Activated CD4-positive, alpha-beta T cell treated with anti-CD3 and anti-CD28 coated beads for 36 hours (primary cell): ENCODE measurements at regions of chr15 and their contacts with region 1.

Region 1: DNA sequence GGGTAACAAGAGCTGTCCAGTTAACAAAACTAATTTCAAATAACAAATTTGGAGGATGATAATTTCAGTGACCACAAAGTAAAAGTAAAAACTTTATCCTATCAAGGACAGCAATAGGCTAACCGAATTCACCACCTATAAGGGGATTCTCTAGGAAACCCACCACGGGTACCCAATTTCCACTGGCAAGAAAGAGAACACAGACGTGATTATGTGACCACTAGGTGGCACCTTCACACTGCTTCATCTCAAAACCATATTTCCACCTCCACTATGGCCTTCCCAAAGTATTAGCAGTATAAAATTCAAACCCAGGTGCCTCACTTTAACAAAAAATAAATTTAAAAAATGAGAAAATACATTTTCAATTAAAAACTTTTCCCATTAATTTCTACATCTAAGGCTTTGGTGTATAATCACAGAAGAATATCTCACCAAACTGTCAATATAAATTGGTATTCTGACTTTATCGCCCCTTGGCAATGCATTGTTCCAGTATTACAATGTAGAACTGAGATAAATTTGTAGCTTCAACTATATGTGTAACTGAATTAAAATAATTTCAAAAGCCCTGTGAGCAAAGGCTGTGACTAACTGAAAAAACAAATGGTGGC is 96.5 kb downstream of the FSIP1 start:
- DNase-seq: peak; percentile 46
- ATAC-seq: no peak
- H3K4me3 Mint-ChIP-seq: no peak overlapping the region
- H3K27ac Mint-ChIP-seq: no peak overlapping the region
- H3K4me1 Mint-ChIP-seq: peaks cover 1% of the 10 kb centered on the region
- H3K27me3 Mint-ChIP-seq: no peaks in the 10 kb centered on the region

Region 2: GRCh38 chr15:39699516-39700374 is 13.6 kb after region 1 on chr15:
- CTCF ChIA-PET with region 1: interaction called, 15 read pairs
- POLR2A ChIA-PET with region 1: no interaction called
- intact Hi-C with region 1: no loop called
- DNase-seq: no peak
- ATAC-seq: no peak
- H3K4me3 Mint-ChIP-seq: no peak overlapping the region
- H3K27ac Mint-ChIP-seq: no peak overlapping the region
- H3K4me1 Mint-ChIP-seq: no peaks in the 10 kb centered on the region
- H3K27me3 Mint-ChIP-seq: no peaks in the 10 kb centered on the region

Region 3: GRCh38 chr15:39713846-39714245 is 27.7 kb after region 1 on chr15:
- CTCF ChIA-PET with region 1: interaction called, 13 read pairs
- POLR2A ChIA-PET with region 1: no interaction called
- intact Hi-C with region 1: no loop called
- DNase-seq: no peak
- ATAC-seq: no peak
- H3K4me3 Mint-ChIP-seq: no peak overlapping the region
- H3K27ac Mint-ChIP-seq: no peak overlapping the region
- H3K4me1 Mint-ChIP-seq: no peaks in the 10 kb centered on the region
- H3K27me3 Mint-ChIP-seq: no peaks in the 10 kb centered on the region

Region 4: DNA sequence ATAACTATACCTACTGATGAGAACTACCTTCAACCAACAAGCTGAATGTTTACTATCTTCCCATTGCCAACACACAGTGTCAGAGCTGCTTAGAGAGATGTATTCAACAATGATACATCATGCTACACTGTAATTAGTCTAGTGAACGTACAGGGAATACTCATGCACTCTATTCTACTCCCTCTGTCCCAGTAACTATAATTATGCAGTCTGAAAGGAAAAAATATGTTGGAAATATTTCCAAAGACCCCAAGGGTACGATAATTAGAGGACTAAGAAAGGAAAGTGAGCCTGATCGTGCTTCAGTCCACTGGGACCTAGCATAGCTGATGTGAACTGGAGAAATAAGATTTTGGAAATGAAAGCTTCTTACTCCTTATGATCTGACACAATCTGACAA is 133.4 kb after region 1 on chr15:
- CTCF ChIA-PET with region 1: no interaction called
- POLR2A ChIA-PET with region 1: no interaction called
- intact Hi-C with region 1: no loop called
- DNase-seq: no peak
- ATAC-seq: no peak
- H3K4me3 Mint-ChIP-seq: no peak overlapping the region
- H3K27ac Mint-ChIP-seq: no peak overlapping the region
- H3K4me1 Mint-ChIP-seq: no peaks in the 10 kb centered on the region
- H3K27me3 Mint-ChIP-seq: peaks cover 4% of the 10 kb centered on the region

Region 5: DNA sequence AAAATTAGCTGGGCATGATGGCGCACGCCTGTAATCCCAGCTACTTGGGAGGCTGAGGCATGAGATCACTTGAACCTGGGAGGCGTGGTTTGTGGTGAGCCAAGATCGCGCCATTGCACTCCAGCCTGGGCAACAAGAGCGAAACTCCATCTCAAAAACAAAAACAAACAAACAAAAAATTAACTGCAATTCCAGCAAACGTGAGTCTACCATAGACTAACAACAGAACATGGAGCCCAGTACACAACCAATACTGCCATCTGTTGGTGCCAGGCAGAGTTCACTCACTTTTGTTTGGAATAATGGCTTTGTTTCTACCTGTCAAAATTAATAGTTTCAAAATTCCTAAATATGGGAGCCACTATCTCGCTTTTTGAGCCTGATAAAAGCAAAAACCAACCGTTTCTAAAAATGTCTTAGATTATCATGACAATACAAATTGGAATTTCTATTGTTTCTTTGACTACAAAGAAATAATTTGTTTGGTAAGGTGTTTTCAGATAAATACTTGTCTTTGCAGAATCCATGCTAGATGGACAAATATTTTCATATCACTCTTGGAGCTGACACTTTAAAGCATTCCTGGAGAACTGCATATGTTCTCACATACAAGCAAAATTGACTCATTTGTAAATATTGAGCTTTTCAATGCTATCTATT is 188.9 kb after region 1 on chr15:
- CTCF ChIA-PET with region 1: interaction called, 10 read pairs
- POLR2A ChIA-PET with region 1: no interaction called
- intact Hi-C with region 1: loop called (anchors 2 kb)
- DNase-seq: peak; percentile 48
- ATAC-seq: no peak
- H3K4me3 Mint-ChIP-seq: no peak overlapping the region
- H3K27ac Mint-ChIP-seq: no peak overlapping the region
- H3K4me1 Mint-ChIP-seq: peaks cover 10% of the 10 kb centered on the region
- H3K27me3 Mint-ChIP-seq: peaks cover 2% of the 10 kb centered on the region

Region 6: DNA sequence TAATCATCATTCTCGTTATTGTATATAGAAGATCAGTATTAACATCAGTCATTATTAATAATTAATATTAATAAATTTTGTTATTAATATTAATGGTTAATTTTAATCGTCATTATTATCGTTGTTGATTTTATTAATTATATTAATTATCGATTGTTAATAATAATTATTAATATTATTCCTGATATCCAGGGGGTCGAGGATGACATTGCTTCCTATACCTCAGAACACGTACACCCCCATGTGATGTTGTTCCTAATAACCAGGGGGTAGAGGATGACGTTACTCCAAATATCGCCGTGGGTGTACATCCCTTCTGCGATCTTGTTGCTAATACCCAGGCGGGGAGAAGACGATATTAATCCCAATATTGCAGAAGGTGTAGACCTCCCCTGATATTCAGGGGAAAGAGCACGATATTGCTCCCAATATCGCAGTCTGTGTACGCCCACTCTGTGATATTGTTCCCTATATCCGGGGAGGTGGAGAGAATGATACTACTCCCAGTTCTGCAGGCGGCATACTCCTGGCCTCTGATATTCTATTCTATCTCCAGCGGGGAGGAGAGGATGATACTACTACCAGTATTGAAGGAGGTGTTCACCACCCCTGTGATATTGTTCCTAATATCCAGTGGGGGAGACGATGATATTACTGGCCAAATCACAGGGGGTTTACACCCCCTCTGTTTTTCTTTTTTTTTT is 444.8 kb after region 1 on chr15:
- CTCF ChIA-PET with region 1: no interaction called
- POLR2A ChIA-PET with region 1: no interaction called
- intact Hi-C with region 1: no loop called
- DNase-seq: no peak
- ATAC-seq: peak; percentile 13
- H3K4me3 Mint-ChIP-seq: no peak overlapping the region
- H3K27ac Mint-ChIP-seq: no peak overlapping the region
- H3K4me1 Mint-ChIP-seq: no peaks in the 10 kb centered on the region
- H3K27me3 Mint-ChIP-seq: no peaks in the 10 kb centered on the region

Region 7: GRCh38 chr15:40623361-40623760 is 937.3 kb after region 1 on chr15:
- CTCF ChIA-PET with region 1: no interaction called
- POLR2A ChIA-PET with region 1: no interaction called
- intact Hi-C with region 1: no loop called
- DNase-seq: no peak
- ATAC-seq: no peak
- H3K4me3 Mint-ChIP-seq: no peak overlapping the region
- H3K27ac Mint-ChIP-seq: no peak overlapping the region
- H3K4me1 Mint-ChIP-seq: no peaks in the 10 kb centered on the region
- H3K27me3 Mint-ChIP-seq: no peaks in the 10 kb centered on the region